Activated T-helper 1 cell treated with anti-CD3 and anti-CD28 coated beads, Interleukin-12 subunit alpha, Interleukin-12 subunit beta, Interleukin-2, Interleukin-4 antibody, amounts not matched to agents 30 ng/mL and 10 ng/mL and 1 ng/mL, durations not matched to agents 14 hours and 24 hours and 36 hours (primary cell): ENCODE measurements at regions of chr3 and their contacts with region 1.

Region 1: GRCh38 chr3:48088749-48089466 is 72.7 kb upstream of the MAP4 start:
- DNase-seq: peak; percentile 94
- H3K4me3 Mint-ChIP-seq: peak overlapping the region; percentile 97
- H3K27ac Mint-ChIP-seq: peak overlapping the region; percentile 99
- H3K4me1 Mint-ChIP-seq: peaks cover 35% of the 10 kb centered on the region
- H3K27me3 Mint-ChIP-seq: peaks cover 7% of the 10 kb centered on the region

Region 2: GRCh38 chr3:47802734-47803477 is 286.0 kb before region 1 on chr3 and contains the start of gene DHX30:
- intact Hi-C with region 1: loop called (anchors 1 kb)
- DNase-seq: peak; percentile 82
- H3K4me3 Mint-ChIP-seq: peak within 1 kb of the TSS; percentile 93
- H3K27ac Mint-ChIP-seq: peak within 1 kb of the TSS; percentile 95
- H3K4me1 Mint-ChIP-seq: peaks cover 19% of the 10 kb centered on the region
- H3K27me3 Mint-ChIP-seq: no peaks in the 10 kb centered on the region
- total RNA-seq, gene DHX30: 149 and 154 TPM in 2 replicates

Region 3: GRCh38 chr3:48047841-48048456 is 41.0 kb before region 1 on chr3:
- intact Hi-C with region 1: no loop called
- DNase-seq: no peak
- H3K4me3 Mint-ChIP-seq: no peak overlapping the region
- H3K27ac Mint-ChIP-seq: no peak overlapping the region
- H3K4me1 Mint-ChIP-seq: peaks cover 14% of the 10 kb centered on the region
- H3K27me3 Mint-ChIP-seq: no peaks in the 10 kb centered on the region